T47D (cell line): ENCODE measurements at regions of chr1 and their contacts with region 1.

Region 1: DNA sequence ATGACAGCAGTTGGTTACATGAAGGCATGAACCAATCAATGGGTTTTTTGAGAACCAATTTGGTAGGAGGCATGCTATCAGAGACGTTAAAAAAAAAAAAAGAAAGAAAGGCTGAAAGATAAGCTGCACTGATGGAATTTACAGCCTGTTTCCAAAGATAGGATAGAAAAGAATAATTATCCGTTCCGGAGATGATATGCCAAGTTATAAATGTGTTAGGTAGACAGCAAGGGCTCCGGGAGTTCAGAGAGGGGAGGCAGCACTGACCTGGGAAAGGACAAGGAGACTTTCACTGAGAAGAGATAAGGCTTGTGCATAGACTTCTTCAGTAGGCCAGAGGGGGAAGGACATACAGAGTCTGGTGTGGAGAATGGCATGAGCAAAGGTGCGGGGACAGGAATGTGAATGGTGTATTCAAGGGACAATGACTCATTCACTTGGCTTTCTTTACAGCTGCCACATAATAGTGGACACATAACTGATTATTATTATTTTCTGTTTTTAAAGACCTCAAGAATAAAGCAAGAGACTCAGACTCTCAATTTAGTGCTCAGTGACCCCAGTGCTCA is 24.8 kb upstream of the ACBD6 start:
- DNase-seq: no peak

Region 2: DNA sequence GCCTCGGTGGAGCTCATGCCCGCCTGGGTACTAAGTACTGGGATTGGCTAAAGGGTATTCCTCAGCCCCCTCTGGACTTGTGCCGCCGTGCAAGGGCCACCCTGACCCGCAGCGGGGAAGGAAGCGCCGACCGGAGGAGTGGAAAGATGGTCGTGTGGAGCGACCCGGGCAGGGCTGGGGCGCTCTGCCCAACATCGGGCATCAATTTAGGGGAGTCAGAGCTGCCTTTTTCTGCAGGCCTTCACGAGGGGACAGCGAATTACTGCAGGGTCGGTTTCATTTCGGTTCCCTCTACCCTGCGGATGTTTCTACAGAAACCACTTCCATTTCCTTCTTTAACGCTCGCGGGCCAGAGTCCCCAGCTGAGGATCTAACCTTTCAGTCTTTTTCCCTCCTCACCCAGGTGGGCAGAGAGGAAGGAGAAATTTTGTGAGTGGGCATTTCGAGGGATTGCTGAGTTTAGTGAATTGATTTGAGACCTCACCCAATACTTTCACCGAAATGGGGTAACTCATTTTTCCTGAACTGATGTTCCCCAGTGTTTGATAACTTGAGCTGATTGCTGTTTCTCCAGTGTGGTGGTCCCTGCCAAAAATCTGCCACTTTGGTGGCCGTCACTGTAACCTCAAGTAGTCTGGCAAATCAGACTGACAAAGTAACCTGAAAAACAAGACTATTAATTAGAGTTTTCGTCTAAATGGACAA is 644.0 kb before region 1 on chr1:
- in situ Hi-C with region 1: no loop called
- DNase-seq: no peak

Region 3: GRCh38 chr1:181166377-181167196 is 639.4 kb after region 1 on chr1:
- in situ Hi-C with region 1: loop called (anchors 10 kb)
- DNase-seq: peak; percentile 63 to 88